Activated CD8-positive, alpha-beta T cell treated with anti-CD3 and anti-CD28 coated beads for 36 hours (primary cell): ENCODE measurements at regions of chr12 and their contacts with region 1.

Region 1: DNA sequence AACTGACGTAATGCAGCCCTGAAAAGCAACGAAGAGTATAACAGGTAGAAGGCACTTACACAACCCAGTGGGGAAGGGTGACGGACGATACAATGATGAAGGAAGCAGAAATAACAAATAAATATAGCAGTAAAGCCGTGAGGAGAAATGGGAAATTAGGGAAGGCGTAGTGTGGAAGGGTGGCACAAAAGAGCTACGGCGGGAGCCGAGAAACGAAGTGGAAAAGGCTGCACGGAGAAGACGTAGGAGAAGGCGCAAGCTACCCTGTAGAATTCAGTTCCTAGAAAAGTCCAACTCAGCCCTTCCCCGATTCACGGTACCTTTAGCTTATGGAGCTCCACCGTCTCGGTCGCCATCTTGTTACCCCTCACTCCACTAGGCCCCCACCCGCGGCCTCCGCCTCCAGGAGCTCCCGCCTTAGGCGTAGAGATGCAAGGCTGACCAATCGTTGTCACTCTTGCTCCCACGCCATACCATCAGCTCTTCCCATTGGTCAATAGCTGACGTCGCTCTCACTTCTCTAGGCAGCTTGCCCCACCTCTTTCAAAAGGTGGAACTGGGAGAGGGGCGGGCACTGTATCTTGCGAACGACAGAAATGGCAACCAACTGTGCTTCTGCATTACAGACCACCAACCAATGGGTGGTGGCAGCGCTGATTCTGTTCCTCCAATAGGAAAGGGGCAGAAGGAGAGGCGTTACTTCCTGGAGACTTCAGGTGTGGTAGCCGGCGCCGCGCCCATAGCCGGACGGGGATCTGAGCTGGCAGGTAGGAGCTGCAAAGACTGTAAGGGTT is at the starts of genes ORMDL2 and SARNP:
- DNase-seq: peak; percentile 99
- ATAC-seq: peak; percentile 97
- H3K4me3 Mint-ChIP-seq: no peak within 1 kb of the TSS
- H3K27ac Mint-ChIP-seq: no peak within 1 kb of the TSS
- H3K4me1 Mint-ChIP-seq: peaks cover 40% of the 10 kb centered on the region
- H3K27me3 Mint-ChIP-seq: no peaks in the 10 kb centered on the region
- CTCF ChIP-seq: no peak
- total RNA-seq, gene ORMDL2: 24.2 to 27.0 TPM
- total RNA-seq, gene SARNP: 93.9 to 94.0 TPM

Region 2: GRCh38 chr12:55728939-55729823 is 88.4 kb before region 1 on chr12 and contains the start of gene CD63:
- CTCF ChIA-PET with region 1: no interaction called
- POLR2A ChIA-PET with region 1: no interaction called
- intact Hi-C with region 1: no loop called
- DNase-seq: peak; percentile 93
- ATAC-seq: peak; percentile 82
- H3K4me3 Mint-ChIP-seq: peak within 1 kb of the TSS; percentile 85
- H3K27ac Mint-ChIP-seq: peak within 1 kb of the TSS; percentile 90
- H3K4me1 Mint-ChIP-seq: peaks cover 33% of the 10 kb centered on the region
- H3K27me3 Mint-ChIP-seq: no peaks in the 10 kb centered on the region
- CTCF ChIP-seq: no peak
- total RNA-seq, gene CD63: 99.6 to 101 TPM

Region 3: DNA sequence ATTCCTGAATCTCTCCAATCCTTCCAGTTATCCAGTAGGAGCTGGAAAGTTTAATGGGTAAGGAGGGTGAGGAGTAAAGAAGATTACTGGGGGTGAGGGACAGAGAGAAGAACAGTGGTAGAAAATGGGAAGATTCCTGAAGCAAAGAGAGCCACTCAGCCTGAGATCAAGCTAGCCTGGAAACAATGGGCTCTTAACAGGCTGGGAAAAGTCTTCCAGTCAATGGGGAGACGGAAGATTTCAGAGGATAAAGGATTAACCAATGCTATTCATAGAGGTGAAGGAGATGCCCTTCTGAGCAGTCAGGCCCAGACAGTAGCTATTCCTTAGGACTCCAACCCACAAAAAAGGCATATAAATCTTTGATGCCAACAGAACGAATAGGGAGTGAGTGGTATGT is 59.8 kb before region 1 on chr12:
- CTCF ChIA-PET with region 1: no interaction called
- POLR2A ChIA-PET with region 1: no interaction called
- intact Hi-C with region 1: no loop called
- DNase-seq: no peak
- ATAC-seq: no peak
- H3K4me3 Mint-ChIP-seq: no peak overlapping the region
- H3K27ac Mint-ChIP-seq: peak overlapping the region; percentile 25
- H3K4me1 Mint-ChIP-seq: peaks cover 19% of the 10 kb centered on the region
- H3K27me3 Mint-ChIP-seq: no peaks in the 10 kb centered on the region
- CTCF ChIP-seq: no peak

Region 4: GRCh38 chr12:55829967-55830600 is 12.5 kb after region 1 on chr12:
- CTCF ChIA-PET with region 1: interaction called, 31 read pairs
- POLR2A ChIA-PET with region 1: interaction called, 20 read pairs
- intact Hi-C with region 1: no loop called
- DNase-seq: peak; percentile 61
- ATAC-seq: peak; percentile 26
- H3K4me3 Mint-ChIP-seq: peak overlapping the region; percentile 97
- H3K27ac Mint-ChIP-seq: peak overlapping the region; percentile 93
- H3K4me1 Mint-ChIP-seq: peaks cover 44% of the 10 kb centered on the region
- H3K27me3 Mint-ChIP-seq: no peaks in the 10 kb centered on the region
- CTCF ChIP-seq: no peak

Region 5: DNA sequence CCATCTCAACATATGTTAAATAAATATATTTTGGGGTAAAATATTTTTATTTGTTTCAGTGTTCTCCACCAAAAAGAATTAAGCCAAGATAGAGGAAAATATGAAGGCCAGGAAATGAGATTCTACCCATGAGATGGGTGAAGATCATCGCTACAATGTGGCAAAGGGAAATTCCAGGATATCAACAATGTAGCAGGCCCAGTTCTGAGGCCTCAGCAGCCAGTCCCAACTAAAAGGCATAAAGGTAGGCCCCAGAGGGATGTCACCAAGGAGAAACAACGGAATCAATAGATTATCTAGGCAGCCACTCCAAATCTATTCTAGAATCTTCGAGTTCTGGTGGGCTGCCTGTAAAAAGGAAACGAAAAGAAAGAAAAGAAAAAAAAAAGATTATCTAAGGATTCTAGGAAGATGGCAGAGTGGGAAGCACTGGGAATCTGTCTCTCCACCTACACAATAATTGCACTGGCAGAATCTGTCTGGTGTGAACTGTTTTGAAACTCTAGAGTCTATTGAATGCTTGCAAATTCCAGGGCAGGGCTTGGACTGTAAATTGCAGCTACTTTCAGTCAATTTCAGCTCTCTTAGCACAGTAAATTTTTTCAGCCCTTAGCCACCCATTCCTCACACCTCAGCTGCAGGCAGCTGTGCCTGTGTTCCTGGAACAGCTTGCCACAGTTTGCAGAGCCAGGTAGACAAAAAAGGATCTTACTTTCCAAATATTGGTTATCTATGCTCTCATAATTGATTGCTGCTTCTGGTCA is 58.3 kb after region 1 on chr12:
- CTCF ChIA-PET with region 1: no interaction called
- POLR2A ChIA-PET with region 1: no interaction called
- intact Hi-C with region 1: no loop called
- DNase-seq: no peak
- ATAC-seq: no peak
- H3K4me3 Mint-ChIP-seq: no peak overlapping the region
- H3K27ac Mint-ChIP-seq: no peak overlapping the region
- H3K4me1 Mint-ChIP-seq: peaks cover 7% of the 10 kb centered on the region
- H3K27me3 Mint-ChIP-seq: no peaks in the 10 kb centered on the region
- CTCF ChIP-seq: no peak

Region 6: GRCh38 chr12:55931780-55932550 is 114.4 kb after region 1 on chr12:
- CTCF ChIA-PET with region 1: interaction called, 34 read pairs
- POLR2A ChIA-PET with region 1: interaction called, 60 read pairs
- intact Hi-C with region 1: no loop called
- DNase-seq: peak; percentile 44
- ATAC-seq: no peak
- H3K4me3 Mint-ChIP-seq: peak overlapping the region; percentile 99
- H3K27ac Mint-ChIP-seq: peak overlapping the region; percentile 99
- H3K4me1 Mint-ChIP-seq: peaks cover 52% of the 10 kb centered on the region
- H3K27me3 Mint-ChIP-seq: no peaks in the 10 kb centered on the region
- CTCF ChIP-seq: no peak